ENCODE measurements at regions of chr2 and their contacts with region 1.

Region 1: DNA sequence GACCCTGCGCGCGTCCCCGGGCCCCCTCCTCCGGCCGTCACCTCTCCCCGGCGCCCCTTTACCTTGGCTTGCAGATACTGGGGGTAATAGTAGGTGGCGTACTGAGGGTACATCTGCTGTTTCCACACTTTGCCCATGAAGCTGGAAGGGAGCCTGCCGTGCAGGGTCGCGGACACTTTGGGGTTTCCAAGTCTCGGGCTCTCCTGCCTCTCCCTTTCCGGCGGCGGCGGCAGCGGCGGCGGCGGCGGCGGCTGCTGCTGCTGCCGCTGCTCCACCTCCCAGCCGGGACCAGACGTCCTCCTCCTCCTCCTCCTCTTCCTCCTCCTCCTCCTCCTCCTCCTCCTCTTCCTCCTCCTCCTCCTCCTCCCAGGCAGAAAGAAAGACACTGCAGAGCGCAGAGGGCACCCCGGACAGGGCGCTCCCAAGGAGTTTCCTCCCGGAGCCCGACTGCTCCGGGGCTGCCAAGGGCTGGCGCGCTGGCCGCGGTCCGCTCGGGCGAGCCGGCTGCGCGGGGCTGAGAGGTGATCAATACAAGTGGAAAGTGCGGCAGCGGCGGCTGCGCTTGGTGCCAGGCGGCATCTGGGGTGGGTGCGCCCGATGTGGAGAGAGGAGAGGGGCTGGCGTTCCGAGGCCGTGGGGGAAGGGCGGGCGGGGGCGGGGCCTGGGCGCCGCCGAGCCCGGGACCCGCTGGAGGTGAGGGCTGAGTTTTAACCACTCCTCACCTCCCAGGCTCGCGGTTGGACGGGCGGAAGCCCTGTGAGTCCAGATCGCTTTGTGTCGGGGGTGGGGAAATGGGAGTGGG is at the start of gene RBMS1:
- DNase-seq: peak; percentile 56
- H3K4me3 Mint-ChIP-seq: peak within 1 kb of the TSS; percentile 97
- H3K27ac Mint-ChIP-seq: peak within 1 kb of the TSS; percentile 84
- H3K4me1 Mint-ChIP-seq: peaks cover 35% of the 10 kb centered on the region
- H3K27me3 Mint-ChIP-seq: peaks cover 19% of the 10 kb centered on the region
- total RNA-seq, gene RBMS1: 65.5 to 67.5 TPM

Region 2: GRCh38 chr2:160087854-160088745 is 405.3 kb before region 1 on chr2:
- CTCF ChIA-PET with region 1: no interaction called
- POLR2A ChIA-PET with region 1: no interaction called
- DNase-seq: no peak
- H3K4me3 Mint-ChIP-seq: no peak overlapping the region
- H3K27ac Mint-ChIP-seq: no peak overlapping the region
- H3K4me1 Mint-ChIP-seq: no peaks in the 10 kb centered on the region
- H3K27me3 Mint-ChIP-seq: no peaks in the 10 kb centered on the region

Region 3: GRCh38 chr2:160194946-160195345 is 298.5 kb before region 1 on chr2:
- CTCF ChIA-PET with region 1: no interaction called
- POLR2A ChIA-PET with region 1: no interaction called
- DNase-seq: peak; percentile 45
- H3K4me3 Mint-ChIP-seq: no peak overlapping the region
- H3K27ac Mint-ChIP-seq: no peak overlapping the region
- H3K4me1 Mint-ChIP-seq: peaks cover 6% of the 10 kb centered on the region
- H3K27me3 Mint-ChIP-seq: peaks cover 8% of the 10 kb centered on the region

Region 4: DNA sequence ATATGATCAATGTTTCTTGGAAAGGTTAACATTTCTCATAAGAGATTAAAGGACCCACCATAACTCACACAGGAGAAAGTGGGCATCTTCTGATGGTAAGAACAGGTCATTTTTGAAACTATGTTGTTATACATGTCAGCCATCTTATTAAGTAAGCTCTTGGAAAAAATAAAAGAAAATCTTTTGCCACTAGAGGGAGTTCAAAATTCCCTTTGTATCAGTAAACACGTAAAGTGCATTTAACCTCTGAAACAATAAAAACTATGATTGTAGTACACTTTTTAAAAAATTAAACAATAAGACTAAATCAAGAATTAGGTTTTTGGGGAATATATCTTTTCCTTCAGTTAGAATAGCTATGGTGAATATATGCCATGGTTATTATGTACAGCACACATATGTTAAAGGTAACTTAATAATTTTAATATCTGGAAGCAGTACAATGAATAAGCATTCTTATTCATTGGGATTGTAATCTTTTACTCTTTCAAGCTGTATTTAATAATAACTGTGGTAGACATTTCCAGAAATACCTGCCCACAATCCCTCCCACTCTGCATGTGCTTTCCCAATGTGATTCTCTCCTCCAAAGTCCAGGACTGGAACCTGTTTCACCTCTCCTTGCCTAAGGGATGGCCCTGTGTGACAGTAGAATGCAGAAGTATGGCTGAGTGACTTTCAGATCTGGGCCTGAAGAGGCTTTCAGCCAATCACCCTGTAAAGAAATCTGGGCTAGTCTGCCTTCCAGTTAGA is 64.0 kb before region 1 on chr2:
- CTCF ChIA-PET with region 1: interaction called, 5 read pairs
- POLR2A ChIA-PET with region 1: interaction called, 10 read pairs
- DNase-seq: no peak
- H3K4me3 Mint-ChIP-seq: no peak overlapping the region
- H3K27ac Mint-ChIP-seq: peak overlapping the region; percentile 88
- H3K4me1 Mint-ChIP-seq: peaks cover 58% of the 10 kb centered on the region
- H3K27me3 Mint-ChIP-seq: peaks cover 2% of the 10 kb centered on the region

Region 5: DNA sequence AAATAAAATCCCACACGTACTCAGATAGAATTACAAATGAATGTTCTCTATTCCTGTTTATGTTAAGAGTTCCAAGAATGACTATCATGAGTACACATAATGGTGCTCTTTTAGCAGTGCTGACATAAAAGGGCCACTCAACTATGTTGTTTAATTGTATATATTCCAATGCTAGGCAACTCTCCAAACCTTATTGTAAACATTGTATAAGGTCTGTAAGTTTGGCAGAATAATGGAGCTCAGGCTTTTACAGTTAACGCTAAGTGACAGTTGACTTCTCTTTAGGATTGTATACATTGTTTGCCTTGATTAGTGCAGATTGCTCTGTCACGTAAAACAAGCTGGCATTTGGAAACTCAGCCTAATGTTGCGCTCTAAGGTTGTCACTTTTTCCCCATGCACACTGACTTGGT is 20.6 kb before region 1 on chr2:
- CTCF ChIA-PET with region 1: interaction called, 4 read pairs
- POLR2A ChIA-PET with region 1: interaction called, 18 read pairs
- DNase-seq: no peak
- H3K4me3 Mint-ChIP-seq: no peak overlapping the region
- H3K27ac Mint-ChIP-seq: peak overlapping the region; percentile 24
- H3K4me1 Mint-ChIP-seq: peaks cover 54% of the 10 kb centered on the region
- H3K27me3 Mint-ChIP-seq: no peaks in the 10 kb centered on the region

Measured in activated CD4-positive, alpha-beta memory T cell treated with anti-CD3 and anti-CD28 coated beads, Interleukin-2, amount 10 ng/mL, durations not matched to agents 7 days and 5 days (primary cell).